Left lung (tissue), 14 donors: ENCODE measurements at regions of chr14 and their contacts with region 1.

Region 1: GRCh38 chr14:60184146-60184904 is 19.1 kb upstream of the DHRS7 start:
- DNase-seq: peak in 2 of 4 donors; percentile 65 to 78
- ATAC-seq: peak; percentile 91
- H3K4me3 ChIP-seq: peak overlapping the region; percentile 18 to 33
- H3K27ac ChIP-seq: peak overlapping the region in 1 of 2 donors; percentile 10
- H3K4me1 ChIP-seq: peaks cover 0 to 8% of the 10 kb centered on the region in 2 donors
- H3K27me3 ChIP-seq: no peaks in the 10 kb centered on the region
- CTCF ChIP-seq: peak; percentile 71 to 74

Region 2: DNA sequence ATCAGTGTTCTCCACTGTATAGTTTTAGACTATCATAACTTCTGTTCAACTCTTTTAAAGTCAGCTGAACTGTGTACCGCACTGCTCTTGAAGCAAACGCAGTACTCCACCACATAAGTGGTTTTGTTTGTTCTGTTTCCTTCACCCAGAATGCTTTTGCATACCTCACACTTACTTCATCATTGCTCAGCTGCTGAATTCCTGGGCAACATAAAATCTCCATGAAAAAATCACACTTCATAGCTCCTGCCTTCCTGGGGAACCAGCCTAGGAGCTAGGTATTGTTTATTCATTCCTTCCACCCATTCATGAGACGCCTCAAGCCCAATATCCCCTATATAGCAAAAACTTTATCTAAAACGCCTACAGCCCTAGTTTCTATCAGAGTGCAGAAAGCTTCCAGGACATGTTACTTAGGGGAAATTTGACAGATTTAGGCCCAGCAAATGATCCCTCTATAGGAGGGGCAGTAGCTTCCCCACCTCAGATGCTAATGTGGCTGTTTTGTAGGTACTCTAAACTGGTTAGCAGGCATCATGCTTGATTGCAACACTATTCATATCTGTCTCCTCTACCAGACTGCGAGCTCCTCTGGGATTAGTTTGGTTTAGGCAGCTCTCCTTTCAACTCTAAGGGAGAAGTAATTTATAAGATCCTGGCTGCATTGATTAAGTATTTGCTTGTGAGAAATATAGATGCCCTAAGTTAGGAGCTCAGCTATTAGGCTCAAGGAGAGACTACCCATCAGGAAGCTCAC is 219.9 kb before region 1 on chr14:
- intact Hi-C with region 1: loop called in 1 of 2 experiments (anchors 10 kb)
- DNase-seq: peak in 2 of 4 donors; percentile 15 to 45
- ATAC-seq: peak; percentile 67
- H3K4me3 ChIP-seq: no peak overlapping the region
- H3K27ac ChIP-seq: no peak overlapping the region
- H3K4me1 ChIP-seq: peaks cover 0 to 8% of the 10 kb centered on the region in 2 donors
- H3K27me3 ChIP-seq: no peaks in the 10 kb centered on the region
- CTCF ChIP-seq: no peak

Region 3: DNA sequence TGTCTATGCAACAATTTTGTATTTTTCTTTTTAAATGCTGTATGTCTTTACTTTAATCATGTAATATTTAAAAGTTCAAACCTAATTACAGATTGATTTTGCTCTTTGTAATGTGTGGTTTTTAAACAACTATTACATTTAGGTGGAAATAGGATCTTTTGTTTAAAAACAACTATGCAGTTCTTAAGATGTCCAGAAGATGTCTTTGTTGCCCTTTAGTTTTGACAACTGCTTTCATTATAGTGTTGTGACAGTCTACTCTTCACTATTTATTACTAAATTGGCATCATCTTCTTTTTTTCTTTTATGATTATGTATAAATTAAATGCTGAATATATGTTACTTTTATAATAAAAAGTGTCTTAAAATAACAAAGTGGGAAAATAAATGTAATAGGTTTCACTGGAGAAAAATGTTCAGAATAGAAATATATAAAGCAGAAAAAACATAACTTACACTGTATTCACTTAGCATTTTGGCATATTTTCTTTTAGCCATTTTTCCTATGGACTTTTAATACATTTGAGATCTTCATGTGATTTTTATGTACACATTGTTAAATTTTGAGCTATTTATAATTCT is 119.7 kb before region 1 on chr14:
- intact Hi-C with region 1: loop called in 1 of 2 experiments (anchors 10 kb)
- DNase-seq: peak in 1 of 4 donors; percentile 27
- ATAC-seq: peak; percentile 52
- H3K4me3 ChIP-seq: no peak overlapping the region
- H3K27ac ChIP-seq: no peak overlapping the region
- H3K4me1 ChIP-seq: no peaks in the 10 kb centered on the region
- H3K27me3 ChIP-seq: peaks cover 0 to 8% of the 10 kb centered on the region in 2 donors
- CTCF ChIP-seq: peak in 1 of 2 donors; percentile 45